ENCODE measurements at regions of chr2 and their contacts with region 1.

Region 1: DNA sequence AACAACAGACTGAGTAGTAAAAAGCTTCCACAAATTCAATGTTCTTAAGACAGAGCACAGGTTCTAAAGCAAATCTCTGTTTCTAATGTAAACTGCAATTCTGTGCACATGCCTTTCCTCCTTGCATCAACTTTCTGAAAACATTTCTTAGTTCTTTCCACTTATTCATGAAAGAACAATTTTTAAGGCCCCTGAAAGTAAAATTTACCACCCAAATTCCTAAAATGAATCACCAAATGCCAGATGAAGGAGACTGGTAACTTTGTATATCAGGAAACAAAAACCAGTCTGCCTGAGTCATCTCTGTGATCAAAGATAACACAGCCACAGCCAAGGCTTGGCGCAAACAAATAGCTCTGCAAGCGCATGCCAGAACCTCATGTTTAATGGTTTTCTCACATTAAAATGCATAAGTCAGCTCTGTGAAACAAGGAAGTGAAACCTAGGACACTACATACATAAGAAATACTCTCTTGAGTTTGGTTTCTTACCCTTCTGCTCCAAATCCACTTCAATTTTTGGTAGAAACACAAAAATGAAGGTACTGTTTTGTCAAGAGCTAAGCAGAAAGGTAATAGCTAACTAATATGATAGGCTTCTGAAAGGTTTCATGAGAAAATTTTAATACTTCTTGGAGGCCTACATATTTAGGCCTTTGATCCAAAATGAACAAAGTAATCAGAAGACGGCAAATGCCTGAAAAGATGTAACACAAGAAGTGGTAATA is 169.4 kb downstream of the THADA start:
- DNase-seq: peak; percentile 93
- H3K4me3 Mint-ChIP-seq: peak overlapping the region; percentile 25
- H3K27ac Mint-ChIP-seq: peak overlapping the region; percentile 49
- H3K4me1 Mint-ChIP-seq: peaks cover 41% of the 10 kb centered on the region
- H3K27me3 Mint-ChIP-seq: peaks cover 4% of the 10 kb centered on the region

Region 2: GRCh38 chr2:43219383-43220228 is 206.9 kb before region 1 on chr2:
- intact Hi-C with region 1: loop called (anchors 1 kb)
- DNase-seq: peak; percentile 95
- H3K4me3 Mint-ChIP-seq: peak overlapping the region; percentile 84
- H3K27ac Mint-ChIP-seq: peak overlapping the region; percentile 96
- H3K4me1 Mint-ChIP-seq: peaks cover 48% of the 10 kb centered on the region
- H3K27me3 Mint-ChIP-seq: peaks cover 2% of the 10 kb centered on the region

Region 3: DNA sequence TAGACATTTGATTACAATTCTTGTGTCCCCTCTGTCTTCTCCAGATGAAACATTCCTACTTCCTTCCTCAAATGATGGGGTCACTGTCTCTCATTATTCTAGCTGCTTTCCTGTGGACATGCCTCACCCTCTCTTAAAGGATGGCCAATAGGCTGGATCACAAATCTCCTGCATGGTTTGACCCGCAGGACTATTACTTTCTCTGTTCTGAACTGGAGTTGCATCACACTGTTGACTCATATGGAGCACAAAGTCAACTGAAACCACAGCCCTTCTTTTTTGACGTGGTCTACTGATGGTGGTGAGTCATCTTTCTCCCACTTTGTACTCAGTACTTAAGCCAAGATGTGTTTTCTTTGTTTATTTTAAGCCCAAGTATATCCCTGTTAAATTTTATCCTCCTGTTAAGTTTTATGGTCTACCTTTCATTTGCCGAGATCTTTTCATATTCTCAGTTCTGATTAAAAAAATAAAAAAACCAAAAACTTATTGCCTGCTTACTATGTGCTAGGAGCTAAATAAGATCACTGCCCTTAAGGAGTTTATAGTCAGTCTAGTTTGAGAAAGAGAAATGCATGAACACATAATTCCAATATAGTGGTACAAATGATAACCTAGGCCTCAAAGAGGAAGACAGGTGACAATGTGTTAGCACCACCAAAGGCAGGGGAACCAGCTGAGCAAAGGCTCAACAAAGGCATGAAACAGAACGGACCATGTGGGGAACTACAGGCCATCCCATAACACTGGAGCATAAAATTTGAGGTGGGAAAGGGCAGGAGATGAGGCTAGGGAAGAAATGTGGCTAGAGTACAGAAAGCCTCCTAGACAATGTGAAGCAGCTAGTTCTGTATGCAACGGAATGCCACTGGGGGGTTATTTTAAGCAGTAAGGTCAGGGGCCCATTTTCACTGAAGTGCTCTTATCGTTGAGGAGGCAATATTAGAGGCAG is 132.4 kb before region 1 on chr2:
- intact Hi-C with region 1: loop called (anchors 1 kb)
- DNase-seq: peak; percentile 88
- H3K4me3 Mint-ChIP-seq: peak overlapping the region; percentile 49
- H3K27ac Mint-ChIP-seq: peak overlapping the region; percentile 76
- H3K4me1 Mint-ChIP-seq: peaks cover 24% of the 10 kb centered on the region
- H3K27me3 Mint-ChIP-seq: no peaks in the 10 kb centered on the region

Region 4: GRCh38 chr2:43370705-43371104 is 55.8 kb before region 1 on chr2:
- intact Hi-C with region 1: no loop called
- DNase-seq: no peak
- H3K4me3 Mint-ChIP-seq: no peak overlapping the region
- H3K27ac Mint-ChIP-seq: no peak overlapping the region
- H3K4me1 Mint-ChIP-seq: peaks cover 2% of the 10 kb centered on the region
- H3K27me3 Mint-ChIP-seq: no peaks in the 10 kb centered on the region

Region 5: GRCh38 chr2:43387092-43388062 is 39.1 kb before region 1 on chr2:
- intact Hi-C with region 1: loop called (anchors 2 kb)
- DNase-seq: peak; percentile 54
- H3K4me3 Mint-ChIP-seq: peak overlapping the region; percentile 19
- H3K27ac Mint-ChIP-seq: peak overlapping the region; percentile 21
- H3K4me1 Mint-ChIP-seq: peaks cover 23% of the 10 kb centered on the region
- H3K27me3 Mint-ChIP-seq: no peaks in the 10 kb centered on the region

Region 6: DNA sequence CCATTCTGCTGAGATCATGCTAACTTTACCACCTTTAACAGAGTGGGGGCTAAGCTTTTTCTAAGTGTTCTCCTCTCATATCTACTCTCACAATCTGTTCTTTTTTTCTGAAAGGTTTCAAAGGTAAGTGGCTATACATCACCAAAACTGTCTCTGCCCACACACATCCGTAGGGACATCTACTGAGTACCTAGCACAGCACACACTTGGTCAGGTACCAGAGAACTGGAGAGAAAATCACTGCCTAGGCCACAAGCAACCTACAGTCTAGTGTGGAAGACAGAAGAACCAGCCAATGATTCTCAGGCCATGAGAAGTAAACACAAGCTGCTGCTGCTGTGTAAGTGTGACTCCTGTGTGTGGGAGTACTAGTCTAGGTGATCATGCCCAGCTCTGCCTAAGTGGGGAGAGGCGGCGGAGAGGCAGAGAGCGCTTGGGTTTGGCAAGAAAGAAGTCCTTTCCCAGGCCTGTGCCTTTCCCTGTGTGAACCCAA is 24.0 kb before region 1 on chr2:
- intact Hi-C with region 1: loop called (anchors 1 kb)
- DNase-seq: no peak
- H3K4me3 Mint-ChIP-seq: no peak overlapping the region
- H3K27ac Mint-ChIP-seq: no peak overlapping the region
- H3K4me1 Mint-ChIP-seq: peaks cover 13% of the 10 kb centered on the region
- H3K27me3 Mint-ChIP-seq: no peaks in the 10 kb centered on the region

Region 7: GRCh38 chr2:43478411-43479086 is 52.1 kb after region 1 on chr2:
- intact Hi-C with region 1: loop called (anchors 5 kb)
- DNase-seq: no peak
- H3K4me3 Mint-ChIP-seq: no peak overlapping the region
- H3K27ac Mint-ChIP-seq: no peak overlapping the region
- H3K4me1 Mint-ChIP-seq: peaks cover 2% of the 10 kb centered on the region
- H3K27me3 Mint-ChIP-seq: no peaks in the 10 kb centered on the region

Region 8: DNA sequence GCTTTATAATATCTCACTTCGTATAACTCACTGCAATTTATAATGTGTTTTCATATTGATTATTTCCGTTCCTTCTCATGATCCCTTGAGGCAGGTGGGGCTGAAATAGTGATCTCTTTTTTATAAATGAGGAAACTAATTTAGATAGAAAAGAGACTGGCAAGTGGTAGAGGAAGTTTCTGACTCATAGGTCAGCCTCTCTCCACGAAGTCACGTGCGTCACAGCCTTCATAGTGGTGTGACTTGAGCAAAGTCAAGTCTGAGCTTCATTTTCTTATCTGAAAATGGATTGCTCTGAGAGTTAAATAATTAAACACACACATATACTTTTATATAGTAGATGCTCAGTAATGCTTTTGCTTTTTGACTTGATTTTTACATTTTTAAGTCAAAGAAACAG is 392.3 kb after region 1 on chr2:
- intact Hi-C with region 1: no loop called
- DNase-seq: no peak
- H3K4me3 Mint-ChIP-seq: no peak overlapping the region
- H3K27ac Mint-ChIP-seq: no peak overlapping the region
- H3K4me1 Mint-ChIP-seq: no peaks in the 10 kb centered on the region
- H3K27me3 Mint-ChIP-seq: peaks cover 16% of the 10 kb centered on the region

Measured in activated CD4-positive, alpha-beta T cell treated with anti-CD3 and anti-CD28 coated beads, Interleukin-2, amount 10 ng/mL, durations not matched to agents 24 days and 14 days (primary cell).